OCI-LY7 (cell line): ENCODE measurements at regions of chr3 and their contacts with region 1.

Region 1: GRCh38 chr3:63877737-63878393 is 14.2 kb downstream of the ATXN7 start:
- DNase-seq: no peak
- H3K4me3 ChIP-seq: no peak overlapping the region
- H3K27ac ChIP-seq: no peak overlapping the region
- H3K4me1 ChIP-seq: peaks cover 26% of the 10 kb centered on the region
- CTCF ChIP-seq: no peak

Region 2: GRCh38 chr3:63896332-63897030 is 18.6 kb after region 1 on chr3:
- CTCF ChIA-PET with region 1: no interaction called
- POLR2A ChIA-PET with region 1: interaction called, 17 read pairs
- intact Hi-C with region 1: no loop called
- DNase-seq: no peak
- H3K4me3 ChIP-seq: no peak overlapping the region
- H3K27ac ChIP-seq: no peak overlapping the region
- H3K4me1 ChIP-seq: peaks cover 13% of the 10 kb centered on the region
- CTCF ChIP-seq: no peak